Ovary (tissue), 10 donors: ENCODE measurements at regions of chr3 and their contacts with region 1.

Region 1: DNA sequence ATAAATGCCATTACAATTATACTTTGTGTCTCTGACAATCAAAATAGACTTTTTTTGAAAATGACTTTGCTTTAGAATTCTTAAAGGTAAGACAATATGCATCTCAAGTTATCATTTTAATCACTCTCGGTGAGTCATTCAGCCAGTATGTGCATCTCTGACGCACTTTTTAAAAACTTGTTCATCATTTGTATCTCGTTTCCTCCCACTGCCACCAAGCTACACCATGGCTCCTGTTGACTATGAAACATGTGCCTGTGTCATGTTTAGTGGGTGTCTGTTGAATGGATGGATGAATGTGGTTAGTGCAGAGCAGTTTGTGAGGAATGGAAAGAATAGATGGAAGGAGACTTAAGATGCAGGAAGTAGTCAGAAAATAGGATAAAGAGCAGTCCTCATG is 68.6 kb downstream of the ARPP21 start:
- DNase-seq: no peak
- H3K4me3 ChIP-seq: no peak overlapping the region
- H3K27ac ChIP-seq: no peak overlapping the region
- H3K4me1 ChIP-seq: no peaks in the 10 kb centered on the region
- H3K27me3 ChIP-seq: no peaks in the 10 kb centered on the region
- CTCF ChIP-seq: no peak
- EP300 ChIP-seq: no peak
- POLR2A ChIP-seq: no peak

Region 2: DNA sequence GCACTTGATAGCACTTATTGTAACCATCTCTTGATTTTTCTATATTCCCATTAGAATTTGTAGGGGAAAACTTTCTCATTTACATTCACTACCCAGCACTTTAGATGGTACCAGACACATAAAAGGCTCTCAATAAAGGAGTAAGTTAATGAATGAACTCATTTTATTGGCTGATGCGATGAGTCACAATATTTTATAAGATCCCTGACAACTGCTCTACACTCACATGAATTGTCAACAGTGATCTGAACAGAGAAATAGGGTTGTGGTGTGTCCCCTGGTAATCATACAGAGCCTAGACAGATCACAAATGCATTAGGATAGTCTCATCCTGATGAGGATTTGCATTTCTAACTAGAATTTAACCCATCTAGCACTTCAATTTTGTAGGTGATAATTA is 636.1 kb before region 1 on chr3:
- intact Hi-C with region 1: loop called in 1 of 4 experiments (anchors 10 kb)
- DNase-seq: no peak
- H3K4me3 ChIP-seq: no peak overlapping the region
- H3K27ac ChIP-seq: no peak overlapping the region
- H3K4me1 ChIP-seq: no peaks in the 10 kb centered on the region
- H3K27me3 ChIP-seq: no peaks in the 10 kb centered on the region
- CTCF ChIP-seq: no peak
- EP300 ChIP-seq: no peak
- POLR2A ChIP-seq: no peak